HEK293T (cell line): ENCODE measurements at regions of chr19 and their contacts with region 1.

Region 1: DNA sequence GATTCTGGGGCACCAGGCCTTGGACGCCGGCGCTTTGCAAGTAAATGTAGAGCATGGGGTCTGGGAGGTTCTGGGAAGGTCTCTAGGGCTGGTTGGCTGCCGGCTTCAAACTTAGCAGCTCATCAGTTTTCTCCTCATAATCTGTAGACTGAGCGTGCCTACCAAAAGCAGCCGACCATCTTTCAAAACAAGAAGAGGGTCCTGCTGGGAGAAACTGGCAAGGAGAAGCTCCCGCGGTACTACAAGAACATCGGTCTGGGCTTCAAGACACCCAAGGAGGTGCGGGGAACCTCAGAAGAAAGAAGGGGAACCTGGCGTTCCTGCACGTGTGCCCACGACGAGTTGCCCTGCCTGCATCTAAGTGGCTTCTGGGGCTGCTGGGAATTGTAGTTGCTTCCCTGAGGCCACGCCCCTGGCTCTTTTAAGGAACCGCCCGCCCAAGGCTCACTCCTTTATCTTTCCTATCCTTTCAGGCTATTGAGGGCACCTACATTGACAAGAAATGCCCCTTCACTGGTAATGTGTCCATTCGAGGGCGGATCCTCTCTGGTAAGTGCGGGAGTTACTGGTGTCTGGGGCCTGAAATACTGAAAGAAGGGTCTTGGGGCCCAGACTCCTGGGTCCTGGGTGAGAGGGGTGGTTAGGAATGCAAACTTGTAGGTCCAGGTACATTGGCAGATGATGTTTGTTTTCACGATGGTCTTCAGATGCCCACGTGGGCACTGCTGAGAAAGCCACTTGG is 984 bp downstream of the RPS11 start:
- DNase-seq: no peak

Region 2: GRCh38 chr19:49421039-49421877 is 76.0 kb before region 1 on chr19:
- CTCF ChIA-PET with region 1: no interaction called
- POLR2A ChIA-PET with region 1: no interaction called
- DNase-seq: peak; percentile 81

Region 3: GRCh38 chr19:49451430-49452181 is 45.6 kb before region 1 on chr19 and contains the start of gene PIH1D1:
- CTCF ChIA-PET with region 1: no interaction called
- POLR2A ChIA-PET with region 1: interaction called, 41 read pairs
- DNase-seq: peak; percentile 89

Region 4: GRCh38 chr19:49473868-49474544 is 23.2 kb before region 1 on chr19 and contains the start of gene FLT3LG:
- CTCF ChIA-PET with region 1: interaction called, 4 read pairs
- POLR2A ChIA-PET with region 1: interaction called, 11 read pairs
- DNase-seq: peak; percentile 80

Region 5: DNA sequence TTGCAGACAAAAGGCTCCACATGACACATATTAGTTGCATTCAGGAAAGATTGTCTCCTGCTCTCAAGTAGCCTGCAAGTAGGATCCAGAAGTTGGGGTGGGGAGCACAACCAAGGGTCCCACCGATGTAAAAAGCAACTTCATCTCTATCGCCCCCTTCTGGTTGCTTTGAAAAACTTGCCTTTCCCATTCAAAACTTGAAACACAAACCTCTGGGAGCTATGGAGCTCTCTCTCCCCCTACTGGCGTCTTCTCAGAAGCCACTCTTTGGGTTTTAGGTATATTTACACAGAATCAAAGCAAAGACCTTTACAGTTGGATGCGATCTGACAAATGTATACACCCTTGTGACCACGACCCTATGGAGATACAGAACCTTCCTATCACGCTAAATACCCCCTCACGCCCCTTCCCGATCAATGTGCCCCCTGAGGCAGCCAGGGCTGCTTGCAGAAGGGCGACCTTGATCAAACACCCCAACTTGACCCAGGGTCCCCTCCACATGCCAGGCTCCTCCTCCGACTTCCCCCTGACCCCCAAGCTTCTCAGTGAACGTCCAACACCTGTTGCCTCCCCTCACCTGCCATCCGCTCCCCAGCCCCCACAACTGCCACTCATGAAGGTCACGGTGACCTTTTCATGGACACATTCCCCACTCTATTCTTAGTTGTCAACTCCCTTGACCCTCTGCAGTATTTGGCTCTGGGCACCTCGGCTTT is 73.1 kb after region 1 on chr19:
- CTCF ChIA-PET with region 1: interaction called, 15 read pairs
- POLR2A ChIA-PET with region 1: interaction called, 3 read pairs
- DNase-seq: peak; percentile 81

Region 6: DNA sequence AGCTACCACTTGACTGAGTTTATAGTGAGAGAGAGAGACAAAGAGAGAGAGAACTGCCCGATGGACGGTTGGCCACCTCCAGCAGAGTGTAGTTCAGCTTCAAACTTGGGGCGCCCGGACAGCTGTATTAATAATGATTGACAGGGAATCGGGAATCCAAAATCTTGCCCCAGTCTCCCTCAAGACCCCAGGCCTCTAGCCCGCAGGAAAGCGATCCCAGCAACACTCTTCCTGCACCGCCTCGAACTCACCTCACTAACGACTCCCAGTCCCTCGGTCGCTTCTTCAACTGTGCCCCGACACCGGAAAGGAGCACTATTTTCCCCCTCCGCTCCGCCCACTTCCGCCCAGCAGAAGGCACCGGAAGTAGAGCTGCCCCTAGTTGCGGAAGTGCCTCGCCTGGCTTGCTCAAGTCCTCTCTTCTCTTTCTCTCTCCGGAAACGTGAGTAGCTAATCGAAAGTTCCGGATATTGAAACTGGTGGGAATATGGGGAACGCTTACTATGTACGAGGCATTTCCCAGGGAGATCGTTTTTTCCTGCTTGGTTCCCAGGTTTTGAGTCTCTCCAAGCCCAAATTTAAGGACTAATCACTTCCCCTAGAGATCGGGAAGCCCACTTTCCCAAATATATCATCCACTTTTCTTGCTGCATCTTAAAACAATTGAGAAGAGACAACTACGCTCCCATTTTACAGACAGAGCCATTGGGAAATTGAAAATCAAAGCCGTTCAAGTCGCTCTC is 83.2 kb after region 1 on chr19 and contains the start of gene NOSIP:
- CTCF ChIA-PET with region 1: no interaction called
- POLR2A ChIA-PET with region 1: interaction called, 10 read pairs
- DNase-seq: peak; percentile 93

Region 7: GRCh38 chr19:49640113-49640898 is 143.1 kb after region 1 on chr19 and contains the start of gene RRAS:
- CTCF ChIA-PET with region 1: no interaction called
- POLR2A ChIA-PET with region 1: interaction called, 18 read pairs
- DNase-seq: peak; percentile 96